CD4-positive, alpha-beta T cell (primary cell): ENCODE measurements at regions of chr7 and their contacts with region 1.

Region 1: GRCh38 chr7:45111298-45112223 is at the start of gene TBRG4:
- DNase-seq: peak; percentile 86 to 98 (median 91)
- ATAC-seq: peak; percentile 78
- H3K4me3 ChIP-seq: peak within 1 kb of the TSS; percentile 94
- H3K4me3 Mint-ChIP-seq: peak within 1 kb of the TSS; percentile 98
- H3K27ac ChIP-seq: peak within 1 kb of the TSS; percentile 99
- H3K27ac Mint-ChIP-seq: peak within 1 kb of the TSS; percentile 96
- H3K4me1 ChIP-seq: peaks cover 51% of the 10 kb centered on the region
- H3K4me1 Mint-ChIP-seq: peaks cover 55% of the 10 kb centered on the region
- H3K27me3 ChIP-seq: no peaks in the 10 kb centered on the region
- H3K27me3 Mint-ChIP-seq: peaks cover 9% of the 10 kb centered on the region
- CTCF ChIP-seq: no peak
- total RNA-seq, gene TBRG4: 104 to 105 TPM

Region 2: GRCh38 chr7:44200647-44201461 is 910.7 kb before region 1 on chr7 and contains the start of gene YKT6:
- CTCF ChIA-PET with region 1: no interaction called
- POLR2A ChIA-PET with region 1: no interaction called
- intact Hi-C with region 1: loop called in 1 of 2 experiments (anchors 5 kb)
- DNase-seq: peak; percentile 89 to 97 (median 92)
- ATAC-seq: peak; percentile 98
- H3K4me3 ChIP-seq: peak within 1 kb of the TSS; percentile 89
- H3K4me3 Mint-ChIP-seq: peak within 1 kb of the TSS; percentile 83
- H3K27ac ChIP-seq: peak within 1 kb of the TSS in 1 of 2 donors; percentile 56
- H3K27ac Mint-ChIP-seq: peak within 1 kb of the TSS; percentile 62
- H3K4me1 ChIP-seq: peaks cover 15% of the 10 kb centered on the region
- H3K4me1 Mint-ChIP-seq: peaks cover 40% of the 10 kb centered on the region
- H3K27me3 ChIP-seq: peaks cover 0 to 7% of the 10 kb centered on the region in 2 experiments
- H3K27me3 Mint-ChIP-seq: peaks cover 13% of the 10 kb centered on the region
- CTCF ChIP-seq: peak; percentile 65
- total RNA-seq, gene YKT6: 85.0 to 86.4 TPM

Region 3: GRCh38 chr7:44973610-44974401 is 137.8 kb before region 1 on chr7:
- CTCF ChIA-PET with region 1: interaction called, 9 read pairs
- POLR2A ChIA-PET with region 1: interaction called, 14 read pairs
- intact Hi-C with region 1: no loop called
- DNase-seq: peak; percentile 45 to 78 (median 65)
- ATAC-seq: peak; percentile 48
- H3K4me3 ChIP-seq: no peak overlapping the region
- H3K4me3 Mint-ChIP-seq: peak overlapping the region; percentile 25
- H3K27ac ChIP-seq: peak overlapping the region in 1 of 2 donors; percentile 1
- H3K27ac Mint-ChIP-seq: peak overlapping the region; percentile 95
- H3K4me1 ChIP-seq: peaks cover 73% of the 10 kb centered on the region
- H3K4me1 Mint-ChIP-seq: peaks cover 45% of the 10 kb centered on the region
- H3K27me3 ChIP-seq: no peaks in the 10 kb centered on the region
- H3K27me3 Mint-ChIP-seq: no peaks in the 10 kb centered on the region
- CTCF ChIP-seq: peak; percentile 67

Region 4: DNA sequence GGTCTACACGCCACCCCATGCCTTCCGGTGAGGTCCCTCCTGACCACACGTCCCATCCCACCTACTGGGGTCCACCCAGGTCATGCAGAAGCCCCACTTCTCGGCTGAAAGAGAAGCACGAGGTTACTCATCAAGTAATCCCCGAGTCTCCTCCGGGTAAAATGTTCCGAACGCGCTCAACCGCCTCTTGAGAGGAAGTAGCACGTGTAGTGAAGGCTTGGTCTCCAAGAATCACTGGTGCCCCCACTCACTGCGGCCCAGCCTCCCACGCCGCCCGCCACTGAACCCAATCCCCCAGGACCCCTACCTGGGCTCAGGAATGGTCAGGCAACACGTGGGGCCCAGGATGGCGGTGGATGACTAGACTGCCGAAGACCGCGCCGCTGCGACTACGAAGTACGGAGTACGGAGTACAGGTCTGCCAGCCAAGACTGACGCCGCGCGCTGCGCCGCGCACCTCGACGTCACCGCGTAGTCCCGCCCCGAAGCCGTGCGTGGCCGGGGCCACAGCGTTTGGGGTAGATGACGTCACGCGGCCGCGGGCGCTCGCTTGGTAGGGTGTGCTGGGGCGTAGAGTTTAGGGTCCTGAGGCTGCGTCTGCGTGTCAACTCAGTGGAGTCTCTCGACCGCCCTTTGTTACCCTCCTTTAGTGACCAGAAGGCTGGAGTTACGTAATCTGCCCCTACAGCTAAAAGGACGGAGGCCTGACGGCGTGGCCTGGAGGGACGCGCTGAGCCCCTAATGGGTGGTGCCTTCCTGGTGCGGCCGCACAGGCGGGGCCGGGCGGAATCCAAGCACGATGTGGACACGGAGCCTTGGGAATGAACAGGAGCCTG is 125.1 kb before region 1 on chr7:
- CTCF ChIA-PET with region 1: no interaction called
- POLR2A ChIA-PET with region 1: interaction called, 13 read pairs
- intact Hi-C with region 1: loop called in 1 of 2 experiments (anchors 5 kb)
- DNase-seq: peak; percentile 86 to 99 (median 94)
- ATAC-seq: peak; percentile 93
- H3K4me3 ChIP-seq: peak overlapping the region; percentile 74
- H3K4me3 Mint-ChIP-seq: peak overlapping the region; percentile 95
- H3K27ac ChIP-seq: peak overlapping the region; percentile 94 to 95
- H3K27ac Mint-ChIP-seq: peak overlapping the region; percentile 95
- H3K4me1 ChIP-seq: peaks cover 52% of the 10 kb centered on the region
- H3K4me1 Mint-ChIP-seq: peaks cover 50% of the 10 kb centered on the region
- H3K27me3 ChIP-seq: no peaks in the 10 kb centered on the region
- H3K27me3 Mint-ChIP-seq: no peaks in the 10 kb centered on the region
- CTCF ChIP-seq: no peak

Region 5: DNA sequence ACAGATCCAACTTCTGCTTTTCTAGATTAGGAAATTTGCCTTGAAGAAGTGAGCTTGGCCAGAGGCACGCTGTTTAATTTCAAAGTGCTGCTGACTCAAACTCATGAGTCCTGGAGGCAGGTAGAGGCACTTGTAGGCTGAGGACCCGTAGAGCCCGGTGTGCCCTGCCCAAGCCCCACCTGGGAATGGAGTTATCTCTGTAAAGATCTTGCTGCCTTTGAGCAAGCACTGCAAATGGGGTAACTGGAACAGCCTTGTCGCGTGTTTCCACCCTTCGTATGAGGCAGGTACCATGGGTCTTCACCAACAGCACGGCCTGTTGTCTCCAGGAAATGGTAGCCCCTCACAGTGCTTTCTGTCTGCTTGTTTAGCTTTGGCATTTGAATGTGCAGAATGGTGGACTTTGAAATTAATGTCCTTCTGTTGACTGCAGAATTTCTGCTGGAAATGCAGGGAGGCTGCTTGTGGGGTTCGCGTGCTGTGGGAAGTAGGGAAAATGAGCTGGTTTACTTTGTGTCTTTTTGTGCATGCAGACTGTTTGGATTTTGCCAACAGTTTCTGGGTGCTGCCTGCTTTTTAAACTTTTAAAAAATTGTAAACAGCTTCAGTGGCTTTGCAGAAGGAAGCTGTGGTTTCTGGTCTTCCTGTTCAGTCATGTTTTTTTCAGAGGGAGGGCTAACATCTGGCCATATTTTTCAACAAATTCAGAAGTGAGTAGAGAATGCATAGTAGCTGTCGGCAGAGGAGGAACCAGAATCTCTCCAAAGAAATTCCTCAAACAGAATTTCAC is 84.4 kb before region 1 on chr7:
- CTCF ChIA-PET with region 1: no interaction called
- POLR2A ChIA-PET with region 1: interaction called, 25 read pairs
- intact Hi-C with region 1: loop called in 1 of 2 experiments (anchors 5 kb)
- DNase-seq: peak in 11 of 14 experiments; percentile 13 to 82 (median 36)
- ATAC-seq: peak; percentile 57
- H3K4me3 ChIP-seq: peak overlapping the region; percentile 96
- H3K4me3 Mint-ChIP-seq: peak overlapping the region; percentile 94
- H3K27ac ChIP-seq: peak overlapping the region; percentile 82 to 83
- H3K27ac Mint-ChIP-seq: peak overlapping the region; percentile 95
- H3K4me1 ChIP-seq: peaks cover 56% of the 10 kb centered on the region
- H3K4me1 Mint-ChIP-seq: peaks cover 67% of the 10 kb centered on the region
- H3K27me3 ChIP-seq: no peaks in the 10 kb centered on the region
- H3K27me3 Mint-ChIP-seq: no peaks in the 10 kb centered on the region
- CTCF ChIP-seq: no peak

Region 6: GRCh38 chr7:45136106-45137060 is 24.8 kb after region 1 on chr7:
- CTCF ChIA-PET with region 1: interaction called, 14 read pairs
- POLR2A ChIA-PET with region 1: interaction called, 17 read pairs
- intact Hi-C with region 1: loop called in 1 of 2 experiments (anchors 2 kb)
- DNase-seq: peak; percentile 48 to 91 (median 61)
- ATAC-seq: peak; percentile 99
- H3K4me3 ChIP-seq: no peak overlapping the region
- H3K4me3 Mint-ChIP-seq: no peak overlapping the region
- H3K27ac ChIP-seq: no peak overlapping the region
- H3K27ac Mint-ChIP-seq: no peak overlapping the region
- H3K4me1 ChIP-seq: peaks cover 9% of the 10 kb centered on the region
- H3K4me1 Mint-ChIP-seq: peaks cover 5% of the 10 kb centered on the region
- H3K27me3 ChIP-seq: no peaks in the 10 kb centered on the region
- H3K27me3 Mint-ChIP-seq: no peaks in the 10 kb centered on the region
- CTCF ChIP-seq: peak; percentile 80